ENCODE measurements at regions of chr1 and their contacts with region 1.

Region 1: DNA sequence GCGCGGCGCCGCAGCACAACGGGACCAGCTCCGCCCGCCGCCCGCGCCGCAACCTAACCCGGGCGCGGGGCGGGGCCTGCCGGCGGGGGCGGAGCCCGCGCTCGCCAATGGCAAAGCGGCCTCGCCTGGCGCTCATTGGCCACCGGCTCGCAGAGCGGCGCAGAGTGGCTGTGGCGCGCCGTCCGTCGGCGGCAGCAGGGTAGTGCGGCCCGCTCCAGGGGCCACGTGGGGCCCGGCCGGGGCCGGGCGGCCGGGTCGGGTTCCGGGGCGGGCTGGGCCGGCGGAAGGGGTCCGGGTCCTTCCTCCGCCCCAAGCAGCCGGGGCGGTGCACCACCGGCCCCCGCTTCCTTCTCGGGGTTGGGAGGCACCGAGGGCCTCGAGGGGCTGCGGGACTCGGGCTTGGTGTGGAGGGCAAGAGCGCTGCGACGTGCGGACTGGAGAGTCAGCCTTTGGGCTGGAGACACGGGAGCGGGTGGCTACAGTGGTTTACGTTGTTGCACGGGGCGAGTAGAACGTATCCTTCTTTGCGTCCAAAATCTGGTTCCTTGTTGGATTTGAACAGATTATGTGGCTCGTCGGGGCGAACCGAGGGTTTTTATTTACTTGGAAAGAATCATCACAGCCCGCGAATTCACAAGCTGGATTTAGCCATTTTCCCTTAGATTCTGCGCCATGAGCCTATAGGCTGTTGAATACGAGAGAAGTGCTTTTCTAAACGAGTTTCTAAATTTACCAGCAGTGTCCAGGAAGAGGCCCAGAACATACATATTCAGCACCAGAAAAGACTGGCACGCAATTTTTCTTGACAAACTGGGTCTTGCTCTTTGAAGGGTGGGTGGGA is at the start of gene SRM:
- DNase-seq: peak; percentile 97
- ATAC-seq: peak; percentile 93
- H3K4me3 ChIP-seq: peak within 1 kb of the TSS; percentile 100
- H3K27ac ChIP-seq: peak within 1 kb of the TSS; percentile 68
- H3K4me1 ChIP-seq: peaks cover 16% of the 10 kb centered on the region; the same call in 1 of the 2 replicates
- H3K27me3 ChIP-seq: no peaks in the 10 kb centered on the region
- CTCF ChIP-seq: no peak
- total RNA-seq, gene SRM: 151 and 290 TPM in 2 replicates

Region 2: GRCh38 chr1:10967090-10967489 is 93.1 kb before region 1 on chr1:
- CTCF ChIA-PET with region 1: no interaction called
- POLR2A ChIA-PET with region 1: interaction called, 18 read pairs
- intact Hi-C with region 1: no loop called
- DNase-seq: no peak
- ATAC-seq: no peak
- H3K4me3 ChIP-seq: no peak overlapping the region
- H3K27ac ChIP-seq: no peak overlapping the region
- H3K4me1 ChIP-seq: 0 out of 2 replicates have a peak, but pooled peaks cover 4% of the 10 kb centered on the region
- H3K27me3 ChIP-seq: no peaks in the 10 kb centered on the region
- CTCF ChIP-seq: no peak

Region 3: GRCh38 chr1:11078631-11079030 is 18.4 kb after region 1 on chr1:
- CTCF ChIA-PET with region 1: no interaction called
- POLR2A ChIA-PET with region 1: interaction called, 15 read pairs
- intact Hi-C with region 1: no loop called
- DNase-seq: no peak
- ATAC-seq: no peak
- H3K4me3 ChIP-seq: no peak overlapping the region
- H3K27ac ChIP-seq: no peak overlapping the region
- H3K4me1 ChIP-seq: no peaks in the 10 kb centered on the region
- H3K27me3 ChIP-seq: no peaks in the 10 kb centered on the region
- CTCF ChIP-seq: no peak

Region 4: GRCh38 chr1:11245904-11246719 is 185.9 kb after region 1 on chr1:
- CTCF ChIA-PET with region 1: no interaction called
- POLR2A ChIA-PET with region 1: interaction called, 13 read pairs
- intact Hi-C with region 1: no loop called
- DNase-seq: no peak
- ATAC-seq: no peak
- H3K4me3 ChIP-seq: no peak overlapping the region
- H3K27ac ChIP-seq: no peak overlapping the region
- H3K4me1 ChIP-seq: no peaks in the 10 kb centered on the region
- H3K27me3 ChIP-seq: no peaks in the 10 kb centered on the region
- CTCF ChIP-seq: no peak

Region 5: GRCh38 chr1:11272832-11273594 is 212.8 kb after region 1 on chr1 and contains the start of gene UBIAD1:
- CTCF ChIA-PET with region 1: no interaction called
- POLR2A ChIA-PET with region 1: no interaction called
- intact Hi-C with region 1: no loop called
- DNase-seq: peak; percentile 76
- ATAC-seq: peak; percentile 88
- H3K4me3 ChIP-seq: peak within 1 kb of the TSS; percentile 93
- H3K27ac ChIP-seq: peak within 1 kb of the TSS; percentile 79
- H3K4me1 ChIP-seq: peaks cover 10% of the 10 kb centered on the region
- H3K27me3 ChIP-seq: no peaks in the 10 kb centered on the region
- CTCF ChIP-seq: no peak
- total RNA-seq, gene UBIAD1: 14.5 and 14.8 TPM in 2 replicates

Measured in PC-3 (cell line).